ENCODE measurements at regions of chr3 and their contacts with region 1.

Region 1: GRCh38 chr3:132352541-132353143 is 35.4 kb downstream of the ACP3 start:
- DNase-seq: peak; percentile 12 to 64 (median 36)
- H3K4me3 ChIP-seq: no peak overlapping the region
- H3K27ac ChIP-seq: no peak overlapping the region
- H3K4me1 ChIP-seq: no peaks in the 10 kb centered on the region
- H3K27me3 ChIP-seq: no peaks in the 10 kb centered on the region
- CTCF ChIP-seq: peak; percentile 39 to 63 (median 53)
- EP300 ChIP-seq: no peak
- POLR2A ChIP-seq: no peak

Region 2: DNA sequence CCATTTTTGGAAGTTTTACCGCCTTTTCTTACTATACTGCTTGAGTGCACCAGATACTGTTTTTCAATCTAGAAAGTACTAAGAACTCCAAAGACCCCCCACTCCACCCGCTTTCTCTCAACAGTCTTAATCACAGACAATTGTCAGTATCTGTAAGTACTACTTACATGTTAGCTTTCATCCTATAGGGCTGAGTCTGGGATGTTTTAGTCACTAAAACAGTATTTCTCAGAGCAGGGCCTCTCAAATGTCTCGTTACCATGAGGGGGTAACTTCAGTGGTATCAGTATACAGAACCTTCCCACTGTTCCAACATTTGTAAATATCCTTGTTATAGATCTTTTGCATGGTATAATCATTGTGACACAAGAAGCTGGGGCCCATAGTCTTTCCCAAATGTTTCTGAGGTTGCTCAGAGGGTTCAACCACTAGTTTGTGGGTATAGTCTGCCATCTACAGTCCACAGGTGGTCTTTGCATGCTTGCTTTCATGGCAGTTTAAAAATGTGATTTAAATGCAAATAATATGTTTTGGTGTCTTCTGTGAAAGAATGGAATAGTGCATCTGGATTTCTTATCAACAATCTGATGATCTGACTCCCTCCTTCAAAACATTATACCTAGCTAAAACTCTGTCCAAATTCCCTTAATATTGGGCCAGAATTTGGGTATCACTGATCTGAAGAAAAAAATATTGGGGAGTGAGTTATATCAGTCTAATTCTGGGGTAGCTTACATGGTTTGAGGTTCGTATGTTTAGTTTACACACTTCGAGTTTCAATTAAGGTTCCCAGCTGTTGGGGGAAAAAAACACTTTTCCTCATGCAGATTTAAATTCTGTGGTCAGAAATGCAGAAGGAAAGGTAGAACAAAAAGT is 46.6 kb after region 1 on chr3:
- intact Hi-C with region 1: no loop called
- DNase-seq: no peak
- H3K4me3 ChIP-seq: no peak overlapping the region
- H3K27ac ChIP-seq: no peak overlapping the region
- H3K4me1 ChIP-seq: no peaks in the 10 kb centered on the region
- H3K27me3 ChIP-seq: no peaks in the 10 kb centered on the region
- CTCF ChIP-seq: peak in 2 of 3 donors; percentile 31 to 45
- EP300 ChIP-seq: no peak
- POLR2A ChIP-seq: no peak

Region 3: DNA sequence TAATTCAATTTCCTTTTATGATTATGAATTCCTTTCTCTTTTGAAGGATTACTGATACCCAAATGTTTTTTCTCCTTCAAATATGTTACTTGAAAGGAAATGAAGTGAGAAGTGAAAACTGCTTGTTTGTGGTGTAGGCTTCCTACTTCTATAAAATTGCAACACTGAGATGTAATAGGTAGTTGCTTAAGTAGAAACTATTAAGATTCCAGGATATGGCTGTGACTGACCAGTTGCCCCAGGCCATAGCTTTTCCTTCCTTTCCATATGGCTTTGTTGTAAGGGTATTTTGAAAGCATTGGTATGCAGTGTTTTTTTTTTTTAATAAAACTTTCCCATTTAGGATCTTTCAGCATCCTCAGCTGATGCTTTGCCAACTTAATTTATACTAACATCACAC is 93.2 kb after region 1 on chr3:
- intact Hi-C with region 1: no loop called
- DNase-seq: no peak
- H3K4me3 ChIP-seq: no peak overlapping the region
- H3K27ac ChIP-seq: no peak overlapping the region
- H3K4me1 ChIP-seq: peaks cover 1% of the 10 kb centered on the region
- H3K27me3 ChIP-seq: no peaks in the 10 kb centered on the region
- CTCF ChIP-seq: no peak
- EP300 ChIP-seq: no peak
- POLR2A ChIP-seq: no peak

Region 4: DNA sequence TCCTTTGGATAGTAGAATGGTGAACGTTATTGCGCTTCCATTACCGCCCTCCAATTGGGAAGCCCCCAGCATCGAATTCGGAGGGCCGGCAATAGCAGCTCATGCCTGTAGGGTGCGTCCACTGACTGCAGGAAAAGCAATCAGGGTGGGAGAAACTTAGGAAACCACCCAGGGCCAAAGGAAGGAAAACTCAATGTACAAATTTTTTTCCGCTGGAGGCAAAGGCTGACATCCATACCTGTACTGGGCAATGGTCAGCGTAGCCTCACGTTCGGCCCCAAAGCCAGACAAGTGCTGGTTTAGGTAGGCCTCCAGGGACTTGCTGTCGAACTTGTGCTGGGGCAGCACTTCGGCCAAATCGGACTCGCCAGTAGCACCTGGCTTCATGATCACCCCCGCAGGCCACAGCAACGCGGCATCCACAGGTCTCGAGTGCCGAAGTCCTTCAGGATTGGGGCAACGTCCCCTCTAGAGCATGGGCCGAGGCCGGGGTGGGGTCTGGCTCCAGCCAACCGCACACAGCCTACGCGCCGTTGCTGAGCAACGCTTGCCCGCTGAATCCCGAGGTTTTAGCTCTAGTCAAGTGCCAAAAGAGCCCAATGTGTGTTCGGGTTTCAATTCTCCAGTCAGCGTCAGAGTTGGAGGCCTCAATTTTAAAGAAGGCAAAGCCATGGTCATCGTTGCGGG is 306.9 kb after region 1 on chr3 and contains the start of gene ACAD11:
- intact Hi-C with region 1: loop called in 1 of 4 experiments (anchors 10 kb)
- DNase-seq: peak; percentile 75 to 79 (median 76)
- H3K4me3 ChIP-seq: peak within 1 kb of the TSS; percentile 86
- H3K27ac ChIP-seq: peak within 1 kb of the TSS; percentile 83 to 87
- H3K4me1 ChIP-seq: peaks cover 2% of the 10 kb centered on the region
- H3K27me3 ChIP-seq: no peaks in the 10 kb centered on the region
- CTCF ChIP-seq: peak; percentile 34 to 58 (median 53)
- EP300 ChIP-seq: no peak
- POLR2A ChIP-seq: no peak
- total RNA-seq, gene ACAD11: 18.7 to 48.8 (median 25.8) TPM

Region 5: GRCh38 chr3:133213937-133214336 is 861.3 kb after region 1 on chr3:
- intact Hi-C with region 1: no loop called
- DNase-seq: no peak
- H3K4me3 ChIP-seq: no peak overlapping the region
- H3K27ac ChIP-seq: no peak overlapping the region
- H3K4me1 ChIP-seq: no peaks in the 10 kb centered on the region
- H3K27me3 ChIP-seq: no peaks in the 10 kb centered on the region
- CTCF ChIP-seq: no peak
- EP300 ChIP-seq: no peak
- POLR2A ChIP-seq: no peak

Measured in ovary (tissue), 10 donors.